Heart right ventricle (tissue), 16 donors: ENCODE measurements at regions of chr18 and their contacts with region 1.

Region 1: DNA sequence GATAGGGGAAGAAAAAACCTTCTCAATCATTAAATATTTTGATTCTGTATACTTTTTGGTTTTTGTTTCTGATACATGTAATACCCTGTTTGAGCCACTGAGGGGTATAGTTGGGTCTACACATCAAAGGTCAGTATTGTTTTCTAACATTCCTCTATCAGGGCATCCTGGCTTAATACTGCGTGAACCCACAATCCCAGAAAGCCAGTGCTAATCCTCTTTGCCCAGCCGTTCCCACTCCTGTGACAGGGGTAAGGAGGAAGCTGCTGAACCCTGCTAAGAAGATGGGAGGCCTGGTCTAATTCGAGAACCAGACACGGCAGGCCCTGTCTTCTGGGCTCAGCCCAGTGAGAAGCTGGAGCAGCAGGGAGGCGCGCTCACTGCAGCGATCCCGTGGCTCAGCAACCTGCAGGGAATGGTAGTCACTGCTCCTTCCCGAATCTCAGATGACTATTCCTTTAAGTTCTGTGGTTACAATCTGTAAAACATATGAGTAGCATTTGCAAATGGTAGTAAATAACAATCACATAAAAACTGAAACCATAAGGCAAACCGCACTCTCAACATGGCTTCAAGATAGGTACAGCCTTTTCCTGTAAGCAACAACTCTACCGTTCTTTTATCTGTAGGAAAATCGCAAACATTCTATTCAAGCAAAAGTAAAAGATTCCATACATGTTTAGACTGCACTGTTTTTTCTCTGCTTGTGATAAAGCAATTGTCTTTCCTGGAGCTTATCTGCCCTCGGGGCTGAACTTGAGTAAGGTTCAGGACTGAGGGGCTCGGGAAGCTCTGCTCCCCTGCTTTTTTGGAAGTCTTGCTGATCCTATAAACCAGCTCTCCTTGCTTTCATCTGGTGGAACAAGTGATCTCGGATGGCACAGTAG is 87.0 kb downstream of the EPB41L3 start:
- DNase-seq: no peak
- ATAC-seq: peak in 7 of 8 donors; percentile 74 to 93 (median 86)
- H3K4me3 ChIP-seq: peak overlapping the region in 5 of 10 donors; percentile 5 to 40 (median 18)
- H3K27ac ChIP-seq: peak overlapping the region in 3 of 10 donors; percentile 22 to 74 (median 46)
- H3K4me1 ChIP-seq: peaks cover 0 to 28% (median 0%) of the 10 kb centered on the region in 9 donors
- H3K27me3 ChIP-seq: no peaks in the 10 kb centered on the region
- CTCF ChIP-seq: peak in 7 of 9 donors; percentile 30 to 58 (median 44)

Region 2: DNA sequence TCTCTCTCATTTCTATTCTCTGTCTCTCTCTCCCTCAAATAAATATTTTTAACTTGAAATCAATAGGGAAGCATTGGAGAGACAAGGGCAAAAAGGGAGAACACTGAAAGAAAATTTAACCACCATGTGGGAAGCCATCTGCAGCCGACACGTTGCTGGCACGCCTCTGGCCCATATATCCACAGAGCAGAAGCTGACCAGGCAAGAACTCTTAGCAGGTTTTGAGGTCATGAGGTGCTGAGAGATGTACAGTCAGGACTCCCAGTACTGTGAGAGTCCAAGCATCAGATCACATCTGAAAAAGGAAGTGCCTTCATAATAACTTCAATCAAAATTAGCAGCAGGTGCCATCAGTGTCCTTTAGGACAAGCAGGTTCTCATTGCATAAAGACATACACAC is 416.3 kb before region 1 on chr18:
- intact Hi-C with region 1: no loop called
- DNase-seq: no peak
- ATAC-seq: no peak
- H3K4me3 ChIP-seq: no peak overlapping the region
- H3K27ac ChIP-seq: no peak overlapping the region
- H3K4me1 ChIP-seq: no peaks in the 10 kb centered on the region
- H3K27me3 ChIP-seq: no peaks in the 10 kb centered on the region
- CTCF ChIP-seq: no peak

Region 3: DNA sequence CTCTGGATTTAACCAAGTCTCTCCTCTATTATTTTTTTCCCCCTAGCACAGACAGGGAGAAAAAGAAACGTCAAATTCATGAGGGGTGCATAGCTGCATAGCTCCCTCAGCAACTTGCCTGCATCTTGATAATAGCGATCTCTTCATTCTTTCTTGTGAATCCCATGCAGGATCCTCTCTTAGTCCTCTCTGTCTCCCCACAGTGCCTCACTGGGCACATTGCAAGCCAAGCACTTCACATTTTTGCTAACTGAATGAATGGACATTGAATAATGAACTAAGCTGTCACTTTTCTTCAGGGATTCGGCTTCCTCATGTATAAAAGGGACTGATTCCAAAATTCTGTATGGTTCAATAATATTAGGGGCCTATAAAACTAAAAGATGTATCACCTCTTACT is 89.8 kb after region 1 on chr18:
- intact Hi-C with region 1: loop called in 4 of 10 experiments (anchors 5 to 10 kb)
- DNase-seq: no peak
- ATAC-seq: peak in 7 of 8 donors; percentile 45 to 59 (median 56)
- H3K4me3 ChIP-seq: no peak overlapping the region
- H3K27ac ChIP-seq: no peak overlapping the region
- H3K4me1 ChIP-seq: peaks cover 0 to 14% (median 5%) of the 10 kb centered on the region in 9 donors
- H3K27me3 ChIP-seq: peaks cover 0 to 38% (median 32%) of the 10 kb centered on the region in 7 donors
- CTCF ChIP-seq: peak in 7 of 9 donors; percentile 13 to 59 (median 52)

Region 4: GRCh38 chr18:5556310-5556974 is 99.6 kb after region 1 on chr18:
- intact Hi-C with region 1: loop called in 1 of 10 experiments (anchors 10 kb)
- DNase-seq: peak in 1 of 2 donors; percentile 39
- ATAC-seq: peak in 5 of 8 donors; percentile 61 to 91 (median 67)
- H3K4me3 ChIP-seq: no peak overlapping the region
- H3K27ac ChIP-seq: peak overlapping the region in 2 of 10 donors; percentile 8 to 71
- H3K4me1 ChIP-seq: peaks cover 0 to 5% (median 0%) of the 10 kb centered on the region in 9 donors
- H3K27me3 ChIP-seq: peaks cover 0 to 9% (median 0%) of the 10 kb centered on the region in 7 donors
- CTCF ChIP-seq: peak in 1 of 9 donors; percentile 8